ENCODE measurements at regions of chr3 and their contacts with region 1.

Region 1: GRCh38 chr3:51498876-51499738 is 708 bp downstream of the DCAF1 start:
- DNase-seq: peak; percentile 88
- H3K4me3 ChIP-seq: peak overlapping the region; percentile 85
- H3K27ac ChIP-seq: peak overlapping the region; percentile 75
- H3K4me1 ChIP-seq: peaks cover 13% of the 10 kb centered on the region
- CTCF ChIP-seq: no peak

Region 2: GRCh38 chr3:51391075-51391567 is 108.0 kb before region 1 on chr3 and contains the start of gene RBM15B:
- CTCF ChIA-PET with region 1: interaction called, 3 read pairs
- POLR2A ChIA-PET with region 1: no interaction called
- intact Hi-C with region 1: loop called (anchors 1 kb)
- DNase-seq: peak; percentile 98
- H3K4me3 ChIP-seq: peak within 1 kb of the TSS; percentile 86
- H3K27ac ChIP-seq: peak within 1 kb of the TSS; percentile 63
- H3K4me1 ChIP-seq: peaks cover 86% of the 10 kb centered on the region
- CTCF ChIP-seq: peak; percentile 40
- total RNA-seq, gene RBM15B: 30.5 and 34.2 TPM in 2 replicates

Region 3: GRCh38 chr3:51559411-51559888 is 60.3 kb after region 1 on chr3:
- CTCF ChIA-PET with region 1: no interaction called
- POLR2A ChIA-PET with region 1: no interaction called
- intact Hi-C with region 1: no loop called
- DNase-seq: no peak
- H3K4me3 ChIP-seq: no peak overlapping the region
- H3K27ac ChIP-seq: no peak overlapping the region
- H3K4me1 ChIP-seq: no peaks in the 10 kb centered on the region
- CTCF ChIP-seq: no peak

Region 4: DNA sequence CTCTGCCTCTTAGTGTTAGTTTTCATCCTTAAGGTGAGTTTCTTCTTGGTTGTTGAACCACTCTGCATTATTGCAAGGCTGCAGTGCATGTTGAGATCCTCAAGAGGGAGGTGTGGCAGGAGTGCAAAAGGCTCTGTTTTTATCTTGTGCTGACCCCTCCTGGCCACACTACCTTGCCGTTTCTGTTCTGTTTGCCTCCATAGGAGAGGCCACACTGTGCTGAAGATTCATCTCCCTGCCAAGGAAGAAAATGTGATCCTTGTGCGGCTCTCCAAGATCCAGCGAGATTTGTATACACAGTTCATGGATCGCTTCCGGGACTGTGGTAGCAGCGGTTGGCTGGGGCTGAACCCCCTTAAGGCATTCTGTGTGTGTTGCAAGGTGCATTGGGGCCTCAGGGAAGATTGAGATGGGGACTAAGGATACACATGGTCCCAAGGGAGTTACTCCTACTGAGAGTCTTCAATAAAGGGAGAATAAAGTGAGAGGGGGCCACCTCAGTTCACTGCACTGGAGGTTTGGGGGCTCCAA is 138.9 kb after region 1 on chr3:
- CTCF ChIA-PET with region 1: interaction called, 6 read pairs
- POLR2A ChIA-PET with region 1: interaction called, 8 read pairs
- intact Hi-C with region 1: loop called (anchors 1 kb)
- DNase-seq: peak; percentile 72
- H3K4me3 ChIP-seq: no peak overlapping the region
- H3K27ac ChIP-seq: no peak overlapping the region
- H3K4me1 ChIP-seq: no peaks in the 10 kb centered on the region
- CTCF ChIP-seq: peak; percentile 92

Region 5: GRCh38 chr3:51682079-51682478 is 183.0 kb after region 1 on chr3:
- CTCF ChIA-PET with region 1: interaction called, 22 read pairs
- POLR2A ChIA-PET with region 1: interaction called, 8 read pairs
- intact Hi-C with region 1: loop called (anchors 1 kb)
- DNase-seq: peak; percentile 87
- H3K4me3 ChIP-seq: no peak overlapping the region
- H3K27ac ChIP-seq: peak overlapping the region; percentile 23
- H3K4me1 ChIP-seq: peaks cover 48% of the 10 kb centered on the region
- CTCF ChIP-seq: peak; percentile 88

Region 6: GRCh38 chr3:51845129-51845528 is 346.0 kb after region 1 on chr3:
- CTCF ChIA-PET with region 1: no interaction called
- POLR2A ChIA-PET with region 1: no interaction called
- intact Hi-C with region 1: no loop called
- DNase-seq: no peak
- H3K4me3 ChIP-seq: no peak overlapping the region
- H3K27ac ChIP-seq: no peak overlapping the region
- H3K4me1 ChIP-seq: no peaks in the 10 kb centered on the region
- CTCF ChIP-seq: no peak

Region 7: DNA sequence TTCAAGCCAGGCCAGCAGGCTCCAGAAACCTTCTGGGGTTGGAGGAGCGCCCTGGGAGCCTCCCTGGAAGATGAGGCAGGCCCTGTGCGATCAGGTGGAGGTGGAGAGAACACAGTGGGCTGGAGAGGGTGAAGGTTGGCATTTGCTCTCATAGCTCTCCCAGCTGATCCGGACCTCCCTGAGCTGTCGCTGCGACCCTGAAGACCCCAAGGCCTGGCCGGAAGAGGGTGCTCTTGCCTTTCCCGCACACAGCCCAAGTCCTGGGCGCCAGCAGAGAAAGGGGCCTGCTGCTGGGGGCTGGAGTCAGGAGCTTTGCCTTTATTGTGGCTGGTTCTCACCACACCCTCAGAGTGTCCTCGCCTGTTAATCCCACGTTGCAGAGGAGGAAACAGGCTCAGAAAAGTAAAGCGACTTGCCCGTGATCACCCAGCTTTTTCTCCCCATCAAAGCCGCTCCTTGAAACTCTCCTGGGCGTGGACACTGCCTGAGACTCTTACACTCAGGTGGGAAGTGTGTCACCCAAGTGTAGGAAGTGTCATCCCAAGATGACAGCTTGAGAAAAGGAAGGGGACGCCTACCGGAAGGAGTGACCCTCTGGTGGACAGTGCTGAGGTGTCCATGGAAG is 505.2 kb after region 1 on chr3:
- CTCF ChIA-PET with region 1: no interaction called
- POLR2A ChIA-PET with region 1: no interaction called
- intact Hi-C with region 1: no loop called
- DNase-seq: no peak
- H3K4me3 ChIP-seq: no peak overlapping the region
- H3K27ac ChIP-seq: no peak overlapping the region
- H3K4me1 ChIP-seq: peaks cover 15% of the 10 kb centered on the region
- CTCF ChIP-seq: no peak

Region 8: GRCh38 chr3:53009826-53010539 is 1510.9 kb after region 1 on chr3:
- CTCF ChIA-PET with region 1: no interaction called
- POLR2A ChIA-PET with region 1: interaction called, 12 read pairs
- intact Hi-C with region 1: no loop called
- DNase-seq: peak; percentile 4
- H3K4me3 ChIP-seq: no peak overlapping the region
- H3K27ac ChIP-seq: no peak overlapping the region
- H3K4me1 ChIP-seq: no peaks in the 10 kb centered on the region
- CTCF ChIP-seq: no peak